AG04450 (cell line): ENCODE measurements at regions of chr5 and their contacts with region 1.

Region 1: DNA sequence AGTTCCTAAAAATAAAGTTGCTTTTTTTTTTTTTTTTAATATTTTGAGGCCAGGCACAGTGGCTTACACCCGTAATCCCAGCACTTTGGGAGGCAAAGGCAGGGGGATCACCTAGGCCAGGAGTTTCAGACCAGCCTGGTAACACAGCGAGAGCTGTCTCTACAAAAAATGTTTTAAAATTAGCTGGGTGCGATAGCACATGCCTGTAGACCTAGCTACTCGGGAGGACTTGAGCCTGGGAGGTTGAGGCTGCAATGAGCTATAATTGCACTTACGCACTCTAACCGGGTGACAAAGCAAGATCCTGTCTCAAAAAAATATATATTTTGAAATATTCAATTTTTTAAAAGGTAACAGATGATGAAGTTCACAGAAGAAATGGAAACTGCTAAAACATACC is 22.9 kb downstream of the GOLPH3 start:
- DNase-seq: no peak
- H3K4me3 ChIP-seq: no peak overlapping the region
- H3K27ac ChIP-seq: no peak overlapping the region
- H3K27me3 ChIP-seq: no peaks in the 10 kb centered on the region
- CTCF ChIP-seq: no peak

Region 2: DNA sequence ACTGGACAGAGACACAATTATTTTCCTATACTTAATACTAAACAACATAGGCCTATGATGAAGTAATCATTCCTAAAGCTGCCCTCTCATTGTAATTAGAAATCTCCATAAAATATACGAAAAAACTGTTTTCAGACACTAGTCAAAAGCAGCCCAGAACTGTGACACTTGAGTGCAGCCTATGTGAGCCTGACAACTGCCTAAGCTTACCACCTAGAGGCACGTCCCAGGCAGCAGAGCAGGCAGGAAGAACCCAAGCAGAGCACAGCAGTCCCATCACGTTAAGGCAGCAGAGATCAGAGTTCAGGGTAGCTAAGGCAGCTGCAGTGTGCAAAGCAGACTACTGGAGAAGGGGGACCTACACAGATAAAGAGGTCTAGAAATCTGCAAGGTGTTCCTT is 23.5 kb before region 1 on chr5:
- CTCF ChIA-PET with region 1: no interaction called
- POLR2A ChIA-PET with region 1: interaction called, 10 read pairs
- DNase-seq: no peak
- H3K4me3 ChIP-seq: no peak overlapping the region
- H3K27ac ChIP-seq: no peak overlapping the region
- H3K27me3 ChIP-seq: no peaks in the 10 kb centered on the region
- CTCF ChIP-seq: no peak